Heart right ventricle (tissue), 16 donors: ENCODE measurements at regions of chr21 and their contacts with region 1.

Region 1: DNA sequence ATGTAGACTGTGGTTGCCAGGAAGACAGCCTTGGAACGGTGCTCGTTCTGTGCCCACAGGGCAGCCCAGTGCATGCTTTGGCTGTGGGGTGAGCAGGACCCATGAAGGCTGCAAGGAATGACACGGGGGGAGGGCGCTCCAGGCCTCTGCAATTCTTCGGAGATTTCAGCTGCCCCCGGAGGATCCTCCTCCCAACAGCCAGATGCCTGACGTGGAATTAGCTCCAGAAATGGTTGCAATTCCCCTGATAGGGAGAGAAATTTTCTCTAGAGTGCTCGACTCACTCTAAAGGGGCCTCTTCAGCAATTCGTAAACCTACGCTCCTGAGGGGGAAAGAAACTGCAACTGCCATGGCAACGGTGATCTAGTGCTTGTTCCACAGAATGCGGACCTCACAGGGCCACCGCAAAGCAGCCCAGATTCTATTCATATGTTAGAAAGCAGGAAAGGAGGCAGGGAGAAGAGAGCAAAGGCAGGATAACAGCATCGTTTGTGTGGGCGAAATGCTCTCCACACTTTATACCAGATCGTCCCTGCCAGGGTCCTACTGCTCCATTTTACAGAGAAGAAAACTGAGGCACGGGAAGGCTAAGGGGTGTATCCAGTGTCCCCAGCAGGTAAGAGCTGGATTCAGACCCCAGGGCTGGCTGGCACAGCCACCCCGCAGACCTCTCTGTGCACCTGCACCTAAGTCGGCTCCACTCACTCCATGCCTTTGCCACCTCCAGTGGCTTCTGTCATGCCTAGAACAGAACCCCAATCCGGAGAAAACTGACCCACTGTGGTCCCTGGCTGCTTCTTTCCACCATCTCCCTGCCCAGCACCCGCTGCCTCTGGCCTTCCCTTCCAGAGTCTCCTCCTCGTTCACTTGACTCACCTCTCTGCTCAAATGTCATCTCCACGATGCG is 11.9 kb upstream of the PDE9A start:
- DNase-seq: no peak
- ATAC-seq: peak in 4 of 8 donors; percentile 12 to 31 (median 24)
- H3K4me3 ChIP-seq: peak overlapping the region in 1 of 10 donors; percentile 5
- H3K27ac ChIP-seq: no peak overlapping the region
- H3K4me1 ChIP-seq: peaks cover 0 to 15% (median 0%) of the 10 kb centered on the region in 9 donors
- H3K27me3 ChIP-seq: peaks cover 0 to 55% (median 40%) of the 10 kb centered on the region in 7 donors
- CTCF ChIP-seq: no peak

Region 2: DNA sequence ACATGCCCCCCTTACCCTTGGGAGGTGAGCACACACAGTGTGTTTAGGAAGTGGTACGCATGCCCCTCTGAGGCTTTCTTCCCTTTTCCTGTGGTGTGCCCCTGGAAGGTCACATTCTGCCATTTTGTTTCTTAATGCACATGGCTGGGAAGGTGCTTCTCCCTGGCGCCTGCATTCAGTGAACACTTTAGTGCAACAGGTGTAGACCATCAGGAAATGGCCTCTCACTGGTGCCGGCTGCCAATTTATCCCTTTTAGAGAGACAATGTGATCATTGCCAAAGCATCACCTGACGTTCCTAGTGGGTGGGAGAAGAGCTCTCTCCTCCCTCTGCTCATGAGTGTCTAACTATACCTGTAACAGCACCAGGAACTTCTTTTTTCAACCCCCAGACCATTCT is 39.9 kb before region 1 on chr21:
- intact Hi-C with region 1: loop called in 1 of 10 experiments (anchors 5 kb)
- DNase-seq: no peak
- ATAC-seq: no peak
- H3K4me3 ChIP-seq: no peak overlapping the region
- H3K27ac ChIP-seq: no peak overlapping the region
- H3K4me1 ChIP-seq: no peaks in the 10 kb centered on the region
- H3K27me3 ChIP-seq: peaks cover 0 to 25% (median 4%) of the 10 kb centered on the region in 7 donors
- CTCF ChIP-seq: no peak

Region 3: GRCh38 chr21:42688841-42689371 is 47.3 kb after region 1 on chr21:
- intact Hi-C with region 1: no loop called
- DNase-seq: no peak
- ATAC-seq: peak in 2 of 8 donors; percentile 19 to 29
- H3K4me3 ChIP-seq: no peak overlapping the region
- H3K27ac ChIP-seq: no peak overlapping the region
- H3K4me1 ChIP-seq: peaks cover 0 to 13% (median 0%) of the 10 kb centered on the region in 9 donors
- H3K27me3 ChIP-seq: peaks cover 0 to 11% (median 0%) of the 10 kb centered on the region in 7 donors
- CTCF ChIP-seq: no peak

Region 4: GRCh38 chr21:42705746-42706374 is 64.3 kb after region 1 on chr21:
- intact Hi-C with region 1: loop called in 1 of 10 experiments (anchors 10 kb)
- DNase-seq: no peak
- ATAC-seq: no peak
- H3K4me3 ChIP-seq: no peak overlapping the region
- H3K27ac ChIP-seq: no peak overlapping the region
- H3K4me1 ChIP-seq: no peaks in the 10 kb centered on the region
- H3K27me3 ChIP-seq: peaks cover 0 to 21% (median 0%) of the 10 kb centered on the region in 7 donors
- CTCF ChIP-seq: no peak

Region 5: GRCh38 chr21:42923541-42924432 is 282.2 kb after region 1 on chr21:
- intact Hi-C with region 1: no loop called
- DNase-seq: peak; percentile 25 to 73
- ATAC-seq: peak; percentile 72 to 93 (median 86)
- H3K4me3 ChIP-seq: peak overlapping the region in 2 of 10 donors; percentile 6 to 7
- H3K27ac ChIP-seq: peak overlapping the region in 1 of 10 donors; percentile 44
- H3K4me1 ChIP-seq: peaks cover 0 to 12% (median 4%) of the 10 kb centered on the region in 9 donors
- H3K27me3 ChIP-seq: no peaks in the 10 kb centered on the region
- CTCF ChIP-seq: peak; percentile 50 to 83 (median 74)